ENCODE measurements at regions of chr2 and their contacts with region 1.

Region 1: DNA sequence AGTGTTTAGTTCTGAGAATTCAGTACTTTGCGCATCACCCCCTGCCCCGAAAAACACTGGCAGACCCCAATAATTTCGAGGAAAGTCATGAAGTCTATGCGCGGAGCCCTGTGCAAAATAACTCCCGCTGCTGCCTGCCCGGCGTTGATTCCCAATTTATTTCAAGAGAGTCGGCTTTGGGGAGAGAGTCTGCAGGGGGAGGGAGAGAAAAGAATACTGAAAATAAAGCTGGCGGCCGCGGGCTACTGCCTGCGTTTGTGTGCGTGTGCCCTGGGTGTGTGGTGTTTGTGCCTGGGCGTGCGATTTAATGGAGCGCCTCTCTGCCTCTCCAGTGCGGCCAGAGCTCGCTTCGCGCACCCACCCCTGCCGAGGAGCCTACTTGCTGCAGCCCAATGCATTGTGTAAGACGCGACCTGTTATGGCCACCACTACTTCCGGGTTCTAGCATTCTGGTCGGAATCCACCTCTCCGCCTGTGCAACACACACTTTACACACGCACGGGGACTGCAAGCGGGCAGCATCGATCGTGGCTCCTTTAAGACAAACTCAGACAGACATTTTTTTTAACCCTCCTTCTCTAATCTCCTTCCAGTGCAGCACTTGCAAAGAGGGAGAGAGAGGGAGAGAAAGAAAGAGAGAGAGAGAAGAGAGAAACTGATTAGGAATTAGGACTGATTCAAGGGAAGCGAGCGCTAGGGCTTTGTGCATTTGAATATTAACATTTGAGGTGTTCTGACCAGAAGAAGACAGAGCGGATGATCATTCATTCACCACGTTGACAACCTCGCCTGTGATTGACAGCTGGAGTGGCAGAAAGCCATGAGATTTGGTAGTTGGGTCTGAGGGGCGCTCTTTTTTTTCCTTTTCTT is at the start of gene MEIS1:
- DNase-seq: peak; percentile 88
- H3K27ac ChIP-seq: peak within 1 kb of the TSS; percentile 96
- CTCF ChIP-seq: no peak

Region 2: GRCh38 chr2:65639156-65639864 is 795.6 kb before region 1 on chr2:
- CTCF ChIA-PET with region 1: interaction called, 11 read pairs
- POLR2A ChIA-PET with region 1: no interaction called
- DNase-seq: peak; percentile 35
- H3K27ac ChIP-seq: peak overlapping the region; percentile 59
- CTCF ChIP-seq: no peak

Region 3: GRCh38 chr2:66105066-66105753 is 329.7 kb before region 1 on chr2:
- CTCF ChIA-PET with region 1: no interaction called
- POLR2A ChIA-PET with region 1: no interaction called
- DNase-seq: no peak
- H3K27ac ChIP-seq: no peak overlapping the region
- CTCF ChIP-seq: no peak

Region 4: GRCh38 chr2:66364495-66365333 is 70.2 kb before region 1 on chr2:
- CTCF ChIA-PET with region 1: no interaction called
- POLR2A ChIA-PET with region 1: no interaction called
- DNase-seq: peak; percentile 53
- H3K27ac ChIP-seq: no peak overlapping the region
- CTCF ChIP-seq: no peak

Region 5: DNA sequence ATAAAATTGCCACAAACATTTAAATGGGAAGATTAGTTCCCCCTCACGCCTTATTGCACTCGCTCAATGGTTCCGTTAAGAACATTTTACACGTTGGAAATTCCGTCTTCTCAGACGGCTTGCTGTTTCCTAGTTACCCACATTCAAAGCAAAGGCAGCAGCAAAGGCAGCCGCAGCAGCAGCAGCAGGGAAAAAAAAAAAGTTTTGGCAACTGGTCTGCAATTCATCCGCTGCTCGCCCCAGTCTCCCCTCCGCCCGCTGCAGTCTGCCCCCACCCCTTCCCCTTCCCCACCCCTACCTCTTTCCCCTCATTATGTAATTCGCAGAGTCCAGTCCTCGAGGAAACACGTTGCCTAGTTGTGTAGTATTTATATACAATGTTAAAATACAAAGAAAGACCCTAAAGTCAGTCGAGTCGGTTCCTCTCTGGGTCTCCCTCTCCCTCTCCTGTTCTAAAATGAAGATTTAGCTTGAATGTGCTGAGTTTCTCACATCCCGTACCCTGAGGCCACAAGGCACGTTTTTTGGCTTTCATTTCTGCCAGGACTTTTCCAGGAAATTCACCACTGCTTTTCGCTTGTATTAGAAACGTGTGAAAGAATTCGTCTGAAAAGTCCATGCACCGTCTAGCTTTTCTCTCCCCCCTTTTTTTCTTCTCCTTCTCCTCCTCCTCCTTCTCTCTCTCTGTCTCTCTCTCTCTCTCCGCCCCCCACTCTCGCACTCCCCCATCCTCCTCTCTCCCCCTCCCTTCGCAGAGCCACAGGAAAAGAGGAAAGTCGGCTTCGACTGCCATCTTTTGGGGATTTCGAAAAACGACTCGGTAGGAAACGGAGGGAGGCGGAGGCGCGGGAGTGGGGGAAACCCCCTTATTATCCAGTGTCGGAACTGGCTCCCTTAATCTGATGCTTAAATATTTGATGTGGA is 140.0 kb after region 1 on chr2:
- CTCF ChIA-PET with region 1: interaction called, 13 read pairs
- POLR2A ChIA-PET with region 1: no interaction called
- DNase-seq: peak; percentile 87
- H3K27ac ChIP-seq: peak overlapping the region; percentile 83
- CTCF ChIP-seq: peak; percentile 68

Region 6: DNA sequence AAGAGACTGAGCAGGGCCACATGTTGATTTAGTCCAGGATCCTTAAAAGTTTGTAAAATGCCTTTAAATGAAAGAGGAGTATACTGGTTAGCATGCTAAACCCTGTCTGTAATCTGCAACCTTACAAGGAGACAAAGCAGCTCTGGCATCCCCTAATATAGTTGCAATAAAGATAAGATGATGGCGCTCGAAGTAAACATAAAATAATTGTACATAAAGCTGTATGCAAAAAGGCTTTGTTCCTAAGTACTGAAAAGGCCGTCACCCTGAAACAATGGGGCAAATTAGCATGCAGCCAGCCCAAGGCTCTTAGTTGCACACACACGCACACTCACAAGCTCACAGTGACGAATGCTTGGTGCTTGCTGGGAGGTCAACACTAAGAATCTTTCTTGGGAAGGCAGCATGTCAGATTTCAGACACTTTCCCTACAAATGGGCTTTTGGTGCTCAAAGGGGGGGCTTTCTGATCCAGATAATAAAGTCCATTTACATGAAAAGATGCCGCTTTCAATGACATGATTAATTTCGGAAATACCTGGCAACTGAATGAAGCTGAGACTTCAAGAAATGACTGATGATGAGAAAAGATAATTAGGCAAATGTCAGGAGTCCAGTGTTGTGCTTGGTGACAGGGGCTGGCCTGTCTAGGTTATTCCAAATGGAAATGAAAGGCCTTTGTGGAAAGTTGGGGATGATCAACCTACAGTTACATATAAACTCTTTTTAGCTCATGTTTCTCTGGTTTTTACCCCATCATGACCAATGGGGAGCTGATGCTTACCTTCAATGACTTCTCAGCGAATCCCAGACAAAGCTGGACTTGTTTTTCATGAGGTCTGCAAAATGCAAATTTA is 370.3 kb after region 1 on chr2:
- CTCF ChIA-PET with region 1: no interaction called
- POLR2A ChIA-PET with region 1: no interaction called
- DNase-seq: no peak
- H3K27ac ChIP-seq: no peak overlapping the region
- CTCF ChIP-seq: no peak

Region 7: DNA sequence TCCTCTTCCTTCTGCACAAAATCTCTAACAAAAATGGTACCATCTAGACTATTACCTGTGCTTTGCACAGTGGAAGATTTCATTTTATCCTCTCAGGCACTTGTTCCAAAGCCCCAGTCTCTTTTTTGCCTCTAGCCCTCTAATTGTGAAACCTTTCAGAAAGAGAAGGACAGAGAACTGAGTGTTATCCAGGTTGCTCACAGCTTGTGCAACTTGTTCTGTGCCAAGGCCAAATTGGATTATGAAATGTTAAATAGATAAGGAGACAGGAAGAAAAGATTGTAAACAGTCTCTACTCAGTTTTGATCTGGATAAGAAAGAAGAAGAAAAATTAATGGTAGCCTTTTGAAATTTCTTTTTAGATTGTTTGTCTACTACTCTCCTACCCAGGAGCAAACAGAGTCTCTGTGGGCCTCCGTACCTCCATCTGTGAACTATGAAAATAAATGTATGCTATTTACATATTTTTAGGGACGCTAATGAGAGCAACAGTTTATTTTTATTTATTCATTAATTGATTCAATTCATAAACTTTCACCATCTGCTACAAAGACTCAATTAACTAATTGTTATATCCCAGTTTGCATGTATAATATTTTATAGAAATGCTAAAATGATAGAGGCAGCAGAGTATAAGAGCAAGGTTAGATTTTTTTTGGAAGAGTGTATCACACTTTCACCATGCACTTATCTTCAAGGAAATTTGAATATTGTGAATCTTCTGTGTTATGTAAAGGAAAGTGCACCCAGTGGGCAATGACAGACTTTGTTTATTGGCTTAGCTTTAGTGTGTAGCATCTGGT is 623.2 kb after region 1 on chr2:
- CTCF ChIA-PET with region 1: interaction called, 10 read pairs
- POLR2A ChIA-PET with region 1: no interaction called
- DNase-seq: peak; percentile 2
- H3K27ac ChIP-seq: no peak overlapping the region
- CTCF ChIP-seq: no peak